ENCODE measurements at regions of chr21 and their contacts with region 1.

Region 1: DNA sequence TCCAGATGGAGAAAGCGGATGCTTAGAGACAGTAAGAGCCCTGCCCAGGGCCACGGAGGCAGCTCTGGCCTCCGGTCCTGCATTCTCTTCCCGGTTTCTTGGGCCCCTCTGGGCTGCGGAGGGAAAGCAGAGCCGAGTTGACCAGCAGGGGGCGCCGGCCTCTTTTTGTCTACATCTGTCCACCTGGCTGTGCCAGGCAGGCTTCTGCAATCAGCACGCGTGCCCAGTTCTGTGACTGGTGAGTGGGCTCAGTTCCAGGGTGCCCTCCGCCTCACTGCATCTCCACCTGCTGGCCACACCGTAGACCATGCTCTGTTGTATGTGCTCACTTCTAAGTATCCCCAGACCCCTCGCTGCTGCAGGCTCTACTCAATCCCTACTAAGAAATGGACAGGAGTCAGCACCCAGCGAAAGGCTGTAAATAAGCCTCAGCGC is 6.7 kb upstream of the HUNK start:
- H3K4me3 ChIP-seq: no peak overlapping the region
- H3K27ac ChIP-seq: no peak overlapping the region
- H3K4me1 ChIP-seq: no peaks in the 10 kb centered on the region
- CTCF ChIP-seq: peak; percentile 87

Region 2: GRCh38 chr21:31647650-31648049 is 218.4 kb before region 1 on chr21:
- CTCF ChIA-PET with region 1: no interaction called
- POLR2A ChIA-PET with region 1: no interaction called
- H3K4me3 ChIP-seq: no peak overlapping the region
- H3K27ac ChIP-seq: no peak overlapping the region
- H3K4me1 ChIP-seq: peaks cover 4% of the 10 kb centered on the region; the same call in 1 of the 2 replicates
- CTCF ChIP-seq: no peak

Region 3: GRCh38 chr21:31837618-31838390 is 28.3 kb before region 1 on chr21:
- CTCF ChIA-PET with region 1: interaction called, 10 read pairs
- POLR2A ChIA-PET with region 1: interaction called, 3 read pairs
- H3K4me3 ChIP-seq: no peak overlapping the region
- H3K27ac ChIP-seq: no peak overlapping the region
- H3K4me1 ChIP-seq: no peaks in the 10 kb centered on the region
- CTCF ChIP-seq: no peak

Region 4: GRCh38 chr21:31846690-31847089 is 19.4 kb before region 1 on chr21:
- CTCF ChIA-PET with region 1: interaction called, 18 read pairs
- POLR2A ChIA-PET with region 1: no interaction called
- H3K4me3 ChIP-seq: no peak overlapping the region
- H3K27ac ChIP-seq: no peak overlapping the region
- H3K4me1 ChIP-seq: no peaks in the 10 kb centered on the region
- CTCF ChIP-seq: no peak

Region 5: GRCh38 chr21:31855150-31855549 is 10.9 kb before region 1 on chr21:
- CTCF ChIA-PET with region 1: interaction called, 22 read pairs
- POLR2A ChIA-PET with region 1: no interaction called
- H3K4me3 ChIP-seq: no peak overlapping the region
- H3K27ac ChIP-seq: no peak overlapping the region
- H3K4me1 ChIP-seq: no peaks in the 10 kb centered on the region
- CTCF ChIP-seq: no peak

Region 6: DNA sequence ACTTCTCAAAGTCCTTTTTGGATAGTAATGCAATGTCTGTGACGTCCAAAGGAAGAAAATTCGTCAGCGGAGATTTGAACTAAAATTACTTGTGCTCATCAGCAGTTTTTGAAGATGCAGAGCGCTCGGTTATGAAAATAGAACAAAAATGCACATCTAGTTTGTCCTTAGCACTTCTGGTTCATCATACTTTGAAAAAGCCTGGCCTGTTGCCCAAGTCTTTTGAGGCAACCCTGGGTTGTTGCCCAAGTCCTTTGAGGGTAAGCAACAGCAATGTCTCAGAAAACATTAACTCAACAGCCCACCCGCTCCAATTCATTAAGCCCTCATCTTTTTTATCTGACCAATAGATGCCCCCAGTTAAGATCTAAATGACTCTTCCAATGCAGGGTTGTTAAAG is 98.6 kb after region 1 on chr21:
- CTCF ChIA-PET with region 1: no interaction called
- POLR2A ChIA-PET with region 1: no interaction called
- H3K4me3 ChIP-seq: no peak overlapping the region
- H3K27ac ChIP-seq: no peak overlapping the region
- H3K4me1 ChIP-seq: no peaks in the 10 kb centered on the region
- CTCF ChIP-seq: no peak

Measured in HEK293 (cell line).